Naive thymus-derived CD4-positive, alpha-beta T cell (primary cell): ENCODE measurements at regions of chr7 and their contacts with region 1.

Region 1: DNA sequence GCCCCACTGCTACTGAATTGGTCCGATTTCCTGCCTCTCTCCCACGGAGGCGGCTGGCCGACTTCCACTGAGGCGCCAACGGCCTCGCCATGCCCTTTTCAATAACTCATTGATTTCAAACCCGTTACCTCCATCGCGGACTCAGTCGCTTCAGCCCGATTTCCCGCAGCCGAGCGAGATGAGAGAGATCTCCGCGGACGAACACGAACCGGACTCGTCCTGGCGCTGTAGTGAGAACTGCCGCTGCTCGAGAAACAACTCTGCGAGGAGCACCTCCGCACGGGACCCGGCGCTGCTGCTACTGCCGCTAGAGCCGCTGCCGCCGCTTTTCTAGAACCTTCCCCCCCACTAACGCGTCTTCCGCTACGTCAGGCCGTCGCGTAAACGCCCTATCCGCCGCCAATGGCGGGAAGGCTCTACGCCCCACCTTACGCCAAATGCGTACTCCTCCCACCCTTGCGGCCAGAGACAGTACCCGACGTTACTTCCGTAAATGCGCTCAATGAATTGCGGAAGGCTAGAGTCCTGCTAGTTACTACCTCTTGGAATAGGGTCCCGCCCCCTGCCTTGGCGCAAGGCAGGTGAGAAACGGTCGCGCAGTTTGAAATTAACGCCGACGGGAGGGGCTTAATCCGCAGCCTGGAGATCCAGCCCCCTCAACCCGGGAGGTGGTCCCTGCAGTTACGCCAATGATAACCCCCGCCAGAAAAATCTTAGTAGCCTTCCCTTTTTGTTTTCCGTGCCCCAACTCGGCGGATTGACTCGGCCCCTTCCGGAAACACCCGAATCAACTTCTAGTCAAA is at the start of gene HNRNPA2B1:
- DNase-seq: peak; percentile 97 to 100 (median 99)
- ATAC-seq: peak; percentile 84
- H3K4me3 ChIP-seq: peak within 1 kb of the TSS; percentile 99
- H3K4me3 Mint-ChIP-seq: peak within 1 kb of the TSS; percentile 94 to 100 (median 100)
- H3K27ac ChIP-seq: peak within 1 kb of the TSS; percentile 97
- H3K27ac Mint-ChIP-seq: peak within 1 kb of the TSS; percentile 98 to 100 (median 100)
- H3K4me1 ChIP-seq: peaks cover 27 to 35% of the 10 kb centered on the region in 2 donors
- H3K4me1 Mint-ChIP-seq: peaks cover 37 to 60% (median 53%) of the 10 kb centered on the region in 7 donors
- H3K27me3 ChIP-seq: no peaks in the 10 kb centered on the region
- H3K27me3 Mint-ChIP-seq: peaks cover 0 to 9% (median 0%) of the 10 kb centered on the region in 5 donors
- total RNA-seq, gene HNRNPA2B1: 394 to 702 (median 437) TPM

Region 2: GRCh38 chr7:24979863-24980533 is 1220.6 kb before region 1 on chr7 and contains the start of gene OSBPL3:
- CTCF ChIA-PET with region 1: no interaction called
- POLR2A ChIA-PET with region 1: no interaction called
- intact Hi-C with region 1: loop called in 1 of 2 experiments (anchors 5 kb)
- DNase-seq: peak; percentile 86 to 96 (median 93)
- ATAC-seq: peak; percentile 95
- H3K4me3 ChIP-seq: peak within 1 kb of the TSS; percentile 84
- H3K4me3 Mint-ChIP-seq: peak within 1 kb of the TSS; percentile 93 to 97 (median 96)
- H3K27ac ChIP-seq: peak within 1 kb of the TSS; percentile 69
- H3K27ac Mint-ChIP-seq: peak within 1 kb of the TSS; percentile 73 to 95 (median 89)
- H3K4me1 ChIP-seq: peaks cover 26 to 32% of the 10 kb centered on the region in 2 donors
- H3K4me1 Mint-ChIP-seq: peaks cover 40 to 65% (median 56%) of the 10 kb centered on the region in 7 donors
- H3K27me3 ChIP-seq: no peaks in the 10 kb centered on the region
- H3K27me3 Mint-ChIP-seq: peaks cover 0 to 4% (median 0%) of the 10 kb centered on the region in 5 donors
- total RNA-seq, gene OSBPL3: 17.1 to 75.7 (median 22.7) TPM

Region 3: GRCh38 chr7:25894902-25895791 is 305.5 kb before region 1 on chr7:
- CTCF ChIA-PET with region 1: interaction called, 4 read pairs
- POLR2A ChIA-PET with region 1: interaction called, 7 read pairs
- intact Hi-C with region 1: loop called (anchors 2 to 5 kb)
- DNase-seq: peak; percentile 37 to 66 (median 52)
- ATAC-seq: peak; percentile 84
- H3K4me3 ChIP-seq: peak overlapping the region; percentile 46
- H3K4me3 Mint-ChIP-seq: peak overlapping the region; percentile 48 to 93 (median 77)
- H3K27ac ChIP-seq: no peak overlapping the region
- H3K27ac Mint-ChIP-seq: peak overlapping the region in 4 of 9 donors; percentile 9 to 71 (median 38)
- H3K4me1 ChIP-seq: peaks cover 9 to 13% of the 10 kb centered on the region in 2 donors
- H3K4me1 Mint-ChIP-seq: peaks cover 13 to 29% (median 27%) of the 10 kb centered on the region in 7 donors
- H3K27me3 ChIP-seq: no peaks in the 10 kb centered on the region
- H3K27me3 Mint-ChIP-seq: peaks cover 7 to 37% (median 15%) of the 10 kb centered on the region in 5 donors

Region 4: GRCh38 chr7:26101361-26102151 is 99.1 kb before region 1 on chr7:
- CTCF ChIA-PET with region 1: interaction called, 10 read pairs
- POLR2A ChIA-PET with region 1: interaction called, 22 read pairs
- intact Hi-C with region 1: no loop called
- DNase-seq: peak in 3 of 9 donors; percentile 19 to 26 (median 25)
- ATAC-seq: peak; percentile 20
- H3K4me3 ChIP-seq: peak overlapping the region; percentile 29
- H3K4me3 Mint-ChIP-seq: peak overlapping the region in 9 of 10 donors; percentile 72 to 86 (median 82)
- H3K27ac ChIP-seq: no peak overlapping the region
- H3K27ac Mint-ChIP-seq: peak overlapping the region in 8 of 9 donors; percentile 82 to 98 (median 88)
- H3K4me1 ChIP-seq: peaks cover 0 to 41% of the 10 kb centered on the region in 2 donors
- H3K4me1 Mint-ChIP-seq: peaks cover 12 to 73% (median 48%) of the 10 kb centered on the region in 7 donors
- H3K27me3 ChIP-seq: no peaks in the 10 kb centered on the region
- H3K27me3 Mint-ChIP-seq: no peaks in the 10 kb centered on the region

Region 5: GRCh38 chr7:26187380-26188205 is 13.1 kb before region 1 on chr7:
- CTCF ChIA-PET with region 1: interaction called, 17 read pairs
- POLR2A ChIA-PET with region 1: interaction called, 289 read pairs
- intact Hi-C with region 1: loop called in 1 of 2 experiments (anchors 1 kb)
- DNase-seq: no peak
- ATAC-seq: peak; percentile 37
- H3K4me3 ChIP-seq: no peak overlapping the region
- H3K4me3 Mint-ChIP-seq: peak overlapping the region in 3 of 10 donors; percentile 16 to 49 (median 32)
- H3K27ac ChIP-seq: no peak overlapping the region
- H3K27ac Mint-ChIP-seq: peak overlapping the region in 7 of 9 donors; percentile 25 to 89 (median 71)
- H3K4me1 ChIP-seq: peaks cover 13 to 20% of the 10 kb centered on the region in 2 donors
- H3K4me1 Mint-ChIP-seq: peaks cover 47 to 90% (median 79%) of the 10 kb centered on the region in 7 donors
- H3K27me3 ChIP-seq: no peaks in the 10 kb centered on the region
- H3K27me3 Mint-ChIP-seq: no peaks in the 10 kb centered on the region

Region 6: DNA sequence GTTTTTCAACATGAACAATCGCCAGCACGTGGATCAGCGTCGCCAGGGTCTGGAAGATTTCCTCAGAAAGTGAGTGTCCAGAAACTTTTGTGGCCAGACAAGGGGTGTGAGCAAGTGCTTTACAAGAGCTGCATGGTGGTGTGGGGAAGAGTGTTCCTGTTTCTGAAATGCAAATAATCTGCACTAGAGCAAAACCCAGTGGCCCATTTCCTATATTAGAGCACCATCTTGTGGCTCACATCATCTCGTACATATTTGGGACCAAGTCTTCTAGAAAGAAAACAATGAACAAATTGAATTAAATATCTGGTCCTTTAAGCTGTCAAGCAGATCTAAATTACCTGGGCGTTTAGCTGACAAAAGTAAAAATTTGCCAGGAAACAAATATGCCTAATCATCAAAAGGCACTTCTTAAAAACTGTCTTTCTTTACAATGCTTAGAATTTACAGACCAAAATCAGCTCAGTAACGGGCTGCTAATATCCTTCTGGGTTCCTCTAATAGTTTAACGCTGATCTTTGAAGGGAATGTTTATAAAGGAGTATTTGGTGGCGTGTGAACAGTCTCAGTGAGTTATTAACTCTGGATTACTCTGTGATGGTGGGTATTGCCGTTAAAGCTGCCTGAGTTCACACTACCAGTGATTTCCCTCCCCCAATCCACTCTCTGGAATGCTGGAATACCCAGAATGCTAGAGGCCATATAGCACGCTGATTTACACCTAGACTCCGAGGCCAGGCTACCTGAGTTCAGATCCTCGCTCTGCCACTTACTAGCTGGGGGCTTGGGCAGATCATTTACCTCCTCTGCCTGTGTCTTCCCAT is 164.6 kb after region 1 on chr7:
- CTCF ChIA-PET with region 1: interaction called, 13 read pairs
- POLR2A ChIA-PET with region 1: interaction called, 8 read pairs
- intact Hi-C with region 1: loop called (anchors 1 kb)
- DNase-seq: peak in 7 of 9 donors; percentile 51 to 77 (median 69)
- ATAC-seq: peak; percentile 88
- H3K4me3 ChIP-seq: no peak overlapping the region
- H3K4me3 Mint-ChIP-seq: no peak overlapping the region
- H3K27ac ChIP-seq: no peak overlapping the region
- H3K27ac Mint-ChIP-seq: peak overlapping the region in 1 of 9 donors; percentile 28
- H3K4me1 ChIP-seq: peaks cover 0 to 8% of the 10 kb centered on the region in 2 donors
- H3K4me1 Mint-ChIP-seq: peaks cover 3 to 16% (median 8%) of the 10 kb centered on the region in 7 donors
- H3K27me3 ChIP-seq: no peaks in the 10 kb centered on the region
- H3K27me3 Mint-ChIP-seq: peaks cover 0 to 4% (median 0%) of the 10 kb centered on the region in 5 donors

Region 7: DNA sequence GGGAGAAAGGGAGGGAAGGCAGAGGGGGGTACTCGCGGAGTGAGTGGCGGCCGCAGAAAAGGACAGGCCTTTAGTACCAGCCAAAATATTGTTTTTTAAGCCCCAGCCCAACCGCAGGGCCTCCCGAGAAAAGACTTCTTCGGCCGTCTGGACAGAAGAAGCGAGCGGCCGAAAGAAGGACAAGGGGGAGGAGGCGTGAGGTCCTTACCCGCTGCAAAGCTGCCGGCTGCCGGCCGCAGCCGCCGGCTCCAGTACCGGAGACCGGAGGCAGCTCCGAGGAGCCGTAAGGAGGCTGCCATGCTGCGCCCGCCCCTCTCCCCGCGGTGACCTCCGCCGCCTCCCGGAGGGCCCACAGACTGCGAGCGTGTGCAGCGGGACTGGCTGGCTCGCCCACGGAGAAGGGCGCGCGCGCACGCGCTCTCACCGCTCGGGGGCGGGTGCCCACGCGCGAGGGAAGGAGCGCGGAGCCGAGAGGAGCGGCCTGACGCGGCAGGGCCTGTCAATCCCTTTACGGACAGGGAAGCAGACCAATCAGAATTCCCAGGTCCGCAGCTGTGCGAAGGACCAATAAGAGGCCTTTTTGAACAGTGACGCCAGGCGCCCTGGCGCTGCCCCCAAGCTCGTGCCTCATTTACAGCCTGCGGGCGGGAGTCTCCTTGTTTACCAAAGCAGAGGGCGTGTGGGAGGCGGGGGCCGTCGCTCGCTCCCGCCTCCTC is 1462.0 kb after region 1 on chr7 and contains the start of gene HIBADH:
- CTCF ChIA-PET with region 1: no interaction called
- POLR2A ChIA-PET with region 1: no interaction called
- intact Hi-C with region 1: loop called in 1 of 2 experiments (anchors 2 kb)
- DNase-seq: peak; percentile 94 to 99 (median 97)
- ATAC-seq: peak; percentile 97
- H3K4me3 ChIP-seq: peak within 1 kb of the TSS; percentile 97
- H3K4me3 Mint-ChIP-seq: peak within 1 kb of the TSS; percentile 81 to 92 (median 86)
- H3K27ac ChIP-seq: peak within 1 kb of the TSS; percentile 89
- H3K27ac Mint-ChIP-seq: peak within 1 kb of the TSS; percentile 84 to 97 (median 93)
- H3K4me1 ChIP-seq: peaks cover 6% of the 10 kb centered on the region in 2 donors
- H3K4me1 Mint-ChIP-seq: peaks cover 0 to 40% (median 25%) of the 10 kb centered on the region in 7 donors
- H3K27me3 ChIP-seq: no peaks in the 10 kb centered on the region
- H3K27me3 Mint-ChIP-seq: peaks cover 0 to 2% (median 0%) of the 10 kb centered on the region in 5 donors
- total RNA-seq, gene HIBADH: 8.0 to 16.5 (median 14.3) TPM